ENCODE measurements at regions of chr5 and their contacts with region 1.

Region 1: DNA sequence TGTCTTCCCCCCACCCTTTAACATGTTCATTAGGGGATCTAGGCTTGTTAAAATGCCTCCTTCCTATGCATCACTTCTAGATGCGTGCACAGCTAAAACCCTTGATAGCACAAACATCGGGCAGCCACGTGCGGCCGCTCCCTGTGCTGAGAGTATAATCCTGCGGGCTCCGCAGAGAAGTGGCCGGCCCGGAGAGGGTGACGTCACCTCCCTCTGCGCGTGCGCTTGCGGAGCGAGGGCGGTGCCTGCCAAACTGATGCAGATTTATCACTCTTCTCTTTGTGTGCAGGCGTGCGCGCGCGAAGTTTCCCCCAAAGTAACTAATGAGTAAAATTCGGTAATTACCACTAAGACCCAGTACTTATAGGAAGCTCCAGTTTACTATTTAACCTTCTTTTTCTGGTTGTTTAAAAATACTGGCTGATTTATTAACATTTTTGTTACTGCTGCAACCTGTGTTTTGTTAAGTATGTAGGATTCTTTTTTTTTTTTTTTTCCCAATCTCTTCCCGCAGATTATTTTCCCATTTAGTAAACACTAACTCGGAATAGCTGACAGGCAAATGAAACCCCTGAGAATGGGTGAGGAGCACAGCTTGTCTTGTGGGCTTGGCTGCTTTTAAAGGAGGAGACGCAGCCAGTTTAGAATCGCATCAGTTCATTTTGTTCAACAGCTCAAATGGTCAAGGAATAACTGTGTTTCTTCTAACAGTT is 121.6 kb downstream of the TRIO start:
- DNase-seq: peak; percentile 97
- H3K4me3 ChIP-seq: peak overlapping the region; percentile 40
- H3K27ac ChIP-seq: peak overlapping the region; percentile 78
- H3K4me1 ChIP-seq: peaks cover 67% of the 10 kb centered on the region
- H3K27me3 ChIP-seq: no peaks in the 10 kb centered on the region
- CTCF ChIP-seq: no peak

Region 2: GRCh38 chr5:14142827-14143548 is 121.8 kb before region 1 on chr5 and contains the start of gene TRIO:
- CTCF ChIA-PET with region 1: no interaction called
- POLR2A ChIA-PET with region 1: no interaction called
- intact Hi-C with region 1: loop called (anchors 5 kb)
- DNase-seq: peak; percentile 96
- H3K4me3 ChIP-seq: peak within 1 kb of the TSS; percentile 96
- H3K27ac ChIP-seq: peak within 1 kb of the TSS; percentile 78
- H3K4me1 ChIP-seq: peaks cover 25% of the 10 kb centered on the region
- H3K27me3 ChIP-seq: no peaks in the 10 kb centered on the region
- CTCF ChIP-seq: peak; percentile 56
- total RNA-seq, gene TRIO: 99.8 and 105 TPM in 2 replicates

Region 3: DNA sequence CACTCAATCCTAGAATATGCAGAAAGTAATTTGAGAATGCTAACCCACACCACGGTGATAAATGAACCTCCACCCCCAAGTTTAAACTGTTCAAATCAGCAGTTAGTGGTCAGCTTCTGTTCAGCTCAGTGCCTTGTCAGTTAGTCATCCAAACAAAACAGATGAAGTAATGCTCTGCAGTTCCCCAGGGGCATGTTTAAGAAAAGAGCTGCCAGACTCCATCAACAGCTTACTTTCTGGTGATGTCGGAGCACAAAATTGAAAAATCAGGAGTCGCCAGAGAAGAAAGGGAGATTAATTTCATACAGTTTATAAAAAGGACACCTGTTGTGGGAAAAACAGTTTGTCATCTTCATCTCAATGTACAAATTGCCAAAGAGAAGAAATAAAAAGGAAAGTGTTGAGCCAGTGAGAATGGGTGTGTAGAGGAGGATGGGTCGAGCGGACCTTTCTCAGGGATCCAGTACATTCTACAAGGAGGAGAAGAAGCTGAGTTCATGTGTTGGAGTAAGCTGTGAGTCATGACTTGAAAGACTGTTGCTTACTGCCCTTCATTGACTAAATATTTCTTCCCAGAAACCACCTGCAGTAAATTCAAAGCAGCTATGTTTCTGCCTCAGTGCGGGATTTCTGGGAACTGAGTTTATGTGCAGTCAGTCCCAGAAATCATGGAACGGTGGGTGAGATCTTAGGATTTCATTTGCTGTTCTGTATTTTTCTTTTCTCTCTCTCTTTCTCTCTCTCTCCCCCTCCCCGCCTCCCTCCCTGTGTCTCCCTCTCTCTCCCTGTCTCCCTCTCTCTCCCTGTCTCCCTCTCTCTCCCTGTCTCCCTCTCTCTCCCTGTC is 107.9 kb before region 1 on chr5:
- CTCF ChIA-PET with region 1: interaction called, 3 read pairs
- POLR2A ChIA-PET with region 1: no interaction called
- intact Hi-C with region 1: loop called (anchors 5 kb)
- DNase-seq: peak; percentile 89
- H3K4me3 ChIP-seq: peak overlapping the region; percentile 29
- H3K27ac ChIP-seq: peak overlapping the region; percentile 2
- H3K4me1 ChIP-seq: peaks cover 61% of the 10 kb centered on the region
- H3K27me3 ChIP-seq: no peaks in the 10 kb centered on the region
- CTCF ChIP-seq: no peak

Region 4: DNA sequence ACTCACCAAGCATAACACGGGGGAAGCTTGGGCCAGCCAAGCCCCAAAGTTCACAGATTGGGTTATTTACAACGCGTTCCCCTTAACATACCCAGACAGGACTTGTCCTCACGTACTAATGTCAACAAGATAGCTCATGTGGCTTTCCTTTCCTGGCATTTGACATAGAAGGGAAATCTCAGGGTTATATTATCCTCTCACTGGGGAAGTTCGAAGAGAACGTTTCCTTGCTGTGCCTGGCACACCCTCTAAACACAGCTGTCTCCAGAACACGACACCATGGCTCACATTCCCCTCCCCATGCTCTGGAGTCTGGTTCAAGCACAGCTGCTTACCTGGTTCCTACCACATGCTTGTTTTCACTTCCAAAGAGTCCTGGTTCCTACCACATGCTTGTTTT is 270.0 kb after region 1 on chr5:
- CTCF ChIA-PET with region 1: no interaction called
- POLR2A ChIA-PET with region 1: no interaction called
- intact Hi-C with region 1: no loop called
- DNase-seq: no peak
- H3K4me3 ChIP-seq: no peak overlapping the region
- H3K27ac ChIP-seq: no peak overlapping the region
- H3K4me1 ChIP-seq: no peaks in the 10 kb centered on the region
- H3K27me3 ChIP-seq: no peaks in the 10 kb centered on the region
- CTCF ChIP-seq: no peak

Measured in A673 (cell line).